ENCODE measurements at regions of chr15 and their contacts with region 1.

Region 1: GRCh38 chr15:30030350-30030749 is 52.4 kb upstream of the GOLGA8J start:
- DNase-seq: no peak
- ATAC-seq: no peak
- H3K4me3 Mint-ChIP-seq: no peak overlapping the region
- H3K27ac Mint-ChIP-seq: no peak overlapping the region
- H3K4me1 Mint-ChIP-seq: no peaks in the 10 kb centered on the region
- H3K27me3 Mint-ChIP-seq: peaks cover 13% of the 10 kb centered on the region

Region 2: GRCh38 chr15:29668120-29668602 is 362.2 kb before region 1 on chr15:
- CTCF ChIA-PET with region 1: no interaction called
- POLR2A ChIA-PET with region 1: no interaction called
- intact Hi-C with region 1: loop called in 1 of 2 experiments (anchors 2 kb)
- DNase-seq: peak; percentile 70
- ATAC-seq: peak; percentile 84
- H3K4me3 Mint-ChIP-seq: no peak overlapping the region
- H3K27ac Mint-ChIP-seq: no peak overlapping the region
- H3K4me1 Mint-ChIP-seq: no peaks in the 10 kb centered on the region
- H3K27me3 Mint-ChIP-seq: peaks cover 12% of the 10 kb centered on the region

Measured in activated CD4-positive, alpha-beta T cell treated with anti-CD3 and anti-CD28 coated beads for 36 hours (primary cell).